ENCODE measurements at regions of chr5 and their contacts with region 1.

Region 1: DNA sequence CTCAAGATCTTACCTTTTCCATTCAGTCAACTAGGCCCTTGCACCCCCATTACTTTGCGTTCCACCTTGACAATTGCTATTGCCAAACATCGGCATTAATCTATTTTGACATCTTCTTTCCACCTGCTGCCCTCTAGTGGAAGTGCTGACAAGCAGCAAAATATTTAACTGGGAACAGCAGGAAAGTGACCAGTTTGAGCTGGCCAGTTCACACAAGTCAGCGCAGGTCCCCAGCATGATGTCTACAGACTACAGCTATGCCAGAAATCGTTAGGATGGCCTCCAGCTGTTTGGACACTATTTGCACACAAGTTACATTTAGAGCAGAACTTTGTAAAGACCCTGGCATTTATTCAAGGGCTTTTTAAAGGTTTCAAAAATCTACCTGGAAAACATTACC is 160.1 kb downstream of the GHR start:
- DNase-seq: peak; percentile 65
- H3K4me3 ChIP-seq: no peak overlapping the region
- H3K27ac ChIP-seq: no peak overlapping the region
- H3K4me1 ChIP-seq: no peaks in the 10 kb centered on the region
- H3K27me3 ChIP-seq: no peaks in the 10 kb centered on the region
- CTCF ChIP-seq: peak; percentile 71

Region 2: DNA sequence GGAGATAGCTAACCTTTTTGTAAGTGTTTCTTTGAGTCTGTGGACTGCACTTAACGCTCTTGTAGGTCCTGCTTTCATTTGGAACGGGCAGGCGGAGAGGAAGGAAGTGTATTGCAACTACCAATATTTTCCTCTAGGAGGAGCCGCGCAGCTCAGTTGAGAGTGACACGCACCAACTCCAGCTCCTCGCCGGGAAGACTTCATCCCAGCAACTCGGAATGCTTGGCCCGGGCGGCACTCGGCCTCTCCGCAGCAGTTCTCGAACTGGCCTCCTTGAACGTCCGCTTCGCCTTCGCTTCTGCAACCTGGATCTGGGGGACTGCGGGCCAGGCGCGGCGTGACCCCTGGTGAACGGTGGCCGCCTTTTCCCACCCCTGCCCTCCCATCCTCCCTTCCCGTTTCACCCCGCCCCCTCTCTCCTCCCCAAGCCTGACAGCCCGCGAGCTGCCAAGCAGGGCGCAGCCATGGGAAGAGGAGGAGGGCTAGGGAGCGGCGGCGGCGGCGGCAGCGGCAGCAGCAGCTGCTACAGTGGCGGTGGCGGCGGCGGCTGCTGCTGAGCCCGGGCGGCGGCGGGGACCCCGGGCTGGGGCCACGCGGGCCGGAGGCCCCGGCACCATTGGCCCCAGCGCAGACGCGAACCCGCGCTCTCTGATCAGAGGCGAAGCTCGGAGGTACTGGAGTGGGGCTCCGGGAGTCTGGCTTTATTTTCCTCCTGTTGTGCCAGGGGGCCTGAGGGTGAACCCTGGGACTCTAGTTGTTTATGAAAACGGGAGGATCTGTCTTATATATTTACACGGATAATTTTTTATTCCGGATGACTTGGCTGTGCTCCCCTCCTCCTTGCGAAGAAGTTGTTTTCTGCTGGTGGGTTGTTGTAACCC is 159.8 kb before region 1 on chr5 and contains the start of gene GHR:
- intact Hi-C with region 1: loop called (anchors 5 kb)
- DNase-seq: peak; percentile 83
- H3K4me3 ChIP-seq: peak within 1 kb of the TSS; percentile 58
- H3K27ac ChIP-seq: peak within 1 kb of the TSS; percentile 74
- H3K4me1 ChIP-seq: no peaks in the 10 kb centered on the region
- H3K27me3 ChIP-seq: no peaks in the 10 kb centered on the region
- CTCF ChIP-seq: peak; percentile 61
- total RNA-seq, gene GHR: 2.4 to 6.8 TPM

Region 3: GRCh38 chr5:42953041-42953440 is 369.7 kb after region 1 on chr5:
- intact Hi-C with region 1: no loop called
- DNase-seq: no peak
- H3K4me3 ChIP-seq: no peak overlapping the region
- H3K27ac ChIP-seq: no peak overlapping the region
- H3K4me1 ChIP-seq: peaks cover 10% of the 10 kb centered on the region
- H3K27me3 ChIP-seq: peaks cover 24% of the 10 kb centered on the region
- CTCF ChIP-seq: no peak